ENCODE measurements at regions of chr15 and their contacts with region 1.

Region 1: DNA sequence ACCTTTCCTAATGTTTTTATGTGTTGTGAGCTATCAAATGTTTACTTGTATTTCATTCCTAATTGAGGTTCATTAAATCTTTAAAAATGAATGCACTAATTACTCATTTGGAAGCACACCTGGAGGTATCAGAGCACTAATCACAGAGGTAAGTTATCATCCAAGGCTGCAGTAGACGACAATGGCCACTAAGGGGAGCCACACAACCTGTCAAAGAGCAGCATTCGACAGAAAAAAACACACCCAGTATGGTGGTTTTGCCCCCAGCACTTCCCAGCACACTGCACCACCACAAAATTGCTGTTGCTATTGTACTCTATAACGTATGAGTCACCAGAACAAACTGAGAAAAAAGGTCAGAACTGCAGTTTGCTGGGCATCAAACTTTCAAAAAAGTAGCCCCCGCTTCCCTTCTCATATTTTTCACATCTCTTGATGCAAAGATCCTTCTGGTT is 205.9 kb upstream of the IGF1R start:
- DNase-seq: peak; percentile 45
- H3K4me3 ChIP-seq: no peak overlapping the region
- H3K27ac ChIP-seq: no peak overlapping the region
- H3K4me1 ChIP-seq: no peaks in the 10 kb centered on the region
- H3K27me3 ChIP-seq: no peaks in the 10 kb centered on the region
- CTCF ChIP-seq: peak; percentile 68 to 81 (median 76)
- EP300 ChIP-seq: no peak
- POLR2A ChIP-seq: no peak

Region 2: DNA sequence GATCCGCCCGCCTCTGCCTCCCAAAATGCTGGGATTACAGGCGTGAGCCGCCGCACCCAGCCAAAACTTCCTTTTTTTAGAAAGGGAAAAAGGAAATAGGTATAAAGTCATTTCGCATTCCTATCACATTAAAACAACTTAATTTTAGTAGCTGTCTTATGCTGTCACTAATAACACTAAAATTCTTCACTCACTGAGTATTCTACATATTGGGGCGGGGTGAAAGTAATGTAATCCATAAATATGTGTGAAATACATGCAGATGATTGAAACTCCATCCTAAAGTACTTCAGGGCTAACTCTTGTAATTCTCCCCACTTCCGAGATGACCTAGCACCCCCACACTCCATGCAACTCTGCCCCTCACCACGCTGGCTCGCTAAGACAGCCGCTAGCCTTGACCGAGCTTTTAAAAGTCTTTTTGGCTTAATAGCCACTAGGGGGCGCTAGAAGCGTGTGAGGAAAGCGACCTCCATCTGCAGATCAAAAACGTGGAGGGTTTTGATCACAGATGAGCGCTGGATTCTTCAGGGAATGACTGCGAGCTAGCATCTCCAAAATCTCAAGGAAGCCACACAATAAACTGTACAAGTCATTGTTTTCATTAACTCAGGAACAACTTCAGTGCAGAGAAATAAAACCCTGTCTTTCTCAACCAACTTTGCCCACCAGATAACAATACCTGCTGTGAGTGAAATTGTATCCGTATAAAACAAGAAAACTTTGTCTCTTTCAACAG is 76.6 kb after region 1 on chr15:
- in situ Hi-C with region 1: no loop called
- intact Hi-C with region 1: no loop called
- DNase-seq: peak; percentile 32
- H3K4me3 ChIP-seq: no peak overlapping the region
- H3K27ac ChIP-seq: no peak overlapping the region
- H3K4me1 ChIP-seq: no peaks in the 10 kb centered on the region
- H3K27me3 ChIP-seq: no peaks in the 10 kb centered on the region
- CTCF ChIP-seq: peak; percentile 63 to 79 (median 74)
- EP300 ChIP-seq: no peak
- POLR2A ChIP-seq: no peak

Region 3: DNA sequence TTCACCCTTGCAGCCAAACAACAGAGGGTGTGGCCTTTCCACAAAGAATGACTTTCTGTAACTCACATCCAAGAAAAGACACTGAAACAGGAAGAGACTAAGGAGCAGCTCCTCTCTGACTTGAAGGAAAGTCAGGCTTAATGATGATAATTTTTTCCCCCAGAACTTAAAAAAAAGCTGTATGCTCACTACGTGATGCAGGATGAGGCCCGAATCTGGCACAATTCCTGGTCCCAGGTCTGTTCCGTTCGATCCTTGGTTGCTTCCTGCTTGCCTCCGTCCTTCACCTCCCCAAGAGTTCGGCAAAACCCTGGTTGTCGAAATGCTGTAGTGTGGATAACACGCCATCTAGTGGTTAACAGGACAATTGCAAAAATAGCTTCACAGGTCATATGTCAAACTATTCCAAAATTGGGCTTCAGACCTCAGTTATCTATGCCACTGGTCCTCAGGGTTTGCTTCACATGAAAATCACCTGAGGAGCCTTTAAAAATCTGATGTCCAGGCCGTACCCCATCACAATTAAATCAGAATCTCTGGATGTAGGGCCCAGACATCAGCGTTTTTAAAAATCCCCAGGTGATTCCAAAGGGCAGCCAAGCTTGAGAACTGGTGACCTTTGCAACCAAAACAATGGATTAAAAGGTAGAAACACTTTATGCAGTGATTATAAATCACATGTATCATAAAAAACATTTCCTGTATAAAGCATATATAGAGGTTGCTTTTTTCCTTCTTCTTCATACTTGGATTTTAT is 634.3 kb after region 1 on chr15:
- in situ Hi-C with region 1: loop called in 1 of 4 experiments (anchors 25 kb)
- intact Hi-C with region 1: loop called (anchors 10 kb)
- DNase-seq: peak; percentile 48
- H3K4me3 ChIP-seq: peak overlapping the region in 2 of 4 donors; percentile 25 to 44
- H3K27ac ChIP-seq: peak overlapping the region in 3 of 4 donors; percentile 35 to 36 (median 36)
- H3K4me1 ChIP-seq: peaks cover 0 to 9% (median 0%) of the 10 kb centered on the region in 4 donors
- H3K27me3 ChIP-seq: peaks cover 6% of the 10 kb centered on the region
- CTCF ChIP-seq: peak; percentile 81 to 86 (median 86)
- EP300 ChIP-seq: no peak
- POLR2A ChIP-seq: no peak